CD4-positive, alpha-beta T cell (primary cell): ENCODE measurements at regions of chr6 and their contacts with region 1.

Region 1: GRCh38 chr6:135128268-135128914 is 52.7 kb upstream of the MYB start:
- DNase-seq: peak in 11 of 14 experiments; percentile 14 to 88 (median 40)
- ATAC-seq: peak; percentile 96
- H3K4me3 ChIP-seq: no peak overlapping the region
- H3K4me3 Mint-ChIP-seq: peak overlapping the region; percentile 75
- H3K27ac ChIP-seq: peak overlapping the region; percentile 55 to 73
- H3K27ac Mint-ChIP-seq: peak overlapping the region; percentile 91
- H3K4me1 ChIP-seq: peaks cover 21% of the 10 kb centered on the region
- H3K4me1 Mint-ChIP-seq: peaks cover 39% of the 10 kb centered on the region
- H3K27me3 ChIP-seq: no peaks in the 10 kb centered on the region
- H3K27me3 Mint-ChIP-seq: no peaks in the 10 kb centered on the region
- CTCF ChIP-seq: no peak

Region 2: DNA sequence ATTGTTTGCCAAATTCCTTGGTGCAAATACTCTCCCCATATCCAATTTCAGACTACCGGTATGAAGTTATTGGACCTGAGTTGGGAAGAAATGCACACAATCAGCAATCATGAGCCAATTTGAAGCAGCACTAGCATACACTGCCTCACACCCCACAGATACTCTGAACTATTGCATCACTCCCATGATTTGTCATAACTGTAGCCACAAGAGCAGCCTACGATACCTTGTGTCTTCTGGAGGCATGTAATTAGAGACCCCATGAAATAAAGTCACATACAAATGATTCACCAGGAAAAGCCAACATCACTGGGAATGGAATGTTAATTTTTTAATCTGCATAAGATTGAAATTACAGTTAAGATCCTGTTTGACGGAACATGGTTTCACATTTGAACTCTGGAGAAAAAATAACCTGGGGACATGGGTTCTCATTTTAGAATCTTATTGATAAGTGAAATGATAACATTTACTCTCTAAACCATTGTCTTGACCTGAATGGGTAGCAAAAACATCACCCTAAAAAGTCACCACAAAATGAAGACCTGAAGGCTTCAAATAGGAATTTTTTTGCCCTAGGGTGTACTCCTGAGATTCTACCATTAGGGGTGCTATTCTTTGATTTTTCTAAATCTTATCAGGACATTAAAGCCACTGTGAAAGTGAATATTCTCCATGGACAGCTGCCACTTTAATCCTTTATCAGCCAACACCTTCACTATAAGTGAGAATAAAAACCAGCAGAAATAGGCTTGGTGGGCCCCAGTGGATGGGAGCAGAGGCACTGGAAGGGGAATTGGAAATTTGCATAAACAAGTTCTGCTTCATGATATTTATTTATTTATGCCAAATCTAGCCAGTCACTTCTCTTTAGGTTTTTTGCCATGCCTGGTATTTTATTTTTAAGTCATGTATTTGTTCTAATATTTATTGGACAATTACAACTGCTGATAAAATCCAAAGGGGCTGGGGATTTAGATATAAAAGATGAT is 39.3 kb before region 1 on chr6:
- CTCF ChIA-PET with region 1: interaction called, 3 read pairs
- POLR2A ChIA-PET with region 1: interaction called, 14 read pairs
- intact Hi-C with region 1: loop called in 1 of 2 experiments (anchors 2 kb)
- DNase-seq: peak in 4 of 14 experiments; percentile 50 to 72 (median 64)
- ATAC-seq: peak; percentile 60
- H3K4me3 ChIP-seq: peak overlapping the region; percentile 38
- H3K4me3 Mint-ChIP-seq: peak overlapping the region; percentile 78
- H3K27ac ChIP-seq: peak overlapping the region in 1 of 2 donors; percentile 14
- H3K27ac Mint-ChIP-seq: peak overlapping the region; percentile 94
- H3K4me1 ChIP-seq: peaks cover 44% of the 10 kb centered on the region
- H3K4me1 Mint-ChIP-seq: peaks cover 86% of the 10 kb centered on the region
- H3K27me3 ChIP-seq: no peaks in the 10 kb centered on the region
- H3K27me3 Mint-ChIP-seq: no peaks in the 10 kb centered on the region
- CTCF ChIP-seq: peak; percentile 62

Region 3: GRCh38 chr6:135105710-135106109 is 22.7 kb before region 1 on chr6:
- CTCF ChIA-PET with region 1: no interaction called
- POLR2A ChIA-PET with region 1: interaction called, 19 read pairs
- intact Hi-C with region 1: no loop called
- DNase-seq: no peak
- ATAC-seq: no peak
- H3K4me3 ChIP-seq: no peak overlapping the region
- H3K4me3 Mint-ChIP-seq: no peak overlapping the region
- H3K27ac ChIP-seq: no peak overlapping the region
- H3K27ac Mint-ChIP-seq: peak overlapping the region; percentile 89
- H3K4me1 ChIP-seq: peaks cover 24% of the 10 kb centered on the region
- H3K4me1 Mint-ChIP-seq: peaks cover 66% of the 10 kb centered on the region
- H3K27me3 ChIP-seq: no peaks in the 10 kb centered on the region
- H3K27me3 Mint-ChIP-seq: no peaks in the 10 kb centered on the region
- CTCF ChIP-seq: no peak

Region 4: DNA sequence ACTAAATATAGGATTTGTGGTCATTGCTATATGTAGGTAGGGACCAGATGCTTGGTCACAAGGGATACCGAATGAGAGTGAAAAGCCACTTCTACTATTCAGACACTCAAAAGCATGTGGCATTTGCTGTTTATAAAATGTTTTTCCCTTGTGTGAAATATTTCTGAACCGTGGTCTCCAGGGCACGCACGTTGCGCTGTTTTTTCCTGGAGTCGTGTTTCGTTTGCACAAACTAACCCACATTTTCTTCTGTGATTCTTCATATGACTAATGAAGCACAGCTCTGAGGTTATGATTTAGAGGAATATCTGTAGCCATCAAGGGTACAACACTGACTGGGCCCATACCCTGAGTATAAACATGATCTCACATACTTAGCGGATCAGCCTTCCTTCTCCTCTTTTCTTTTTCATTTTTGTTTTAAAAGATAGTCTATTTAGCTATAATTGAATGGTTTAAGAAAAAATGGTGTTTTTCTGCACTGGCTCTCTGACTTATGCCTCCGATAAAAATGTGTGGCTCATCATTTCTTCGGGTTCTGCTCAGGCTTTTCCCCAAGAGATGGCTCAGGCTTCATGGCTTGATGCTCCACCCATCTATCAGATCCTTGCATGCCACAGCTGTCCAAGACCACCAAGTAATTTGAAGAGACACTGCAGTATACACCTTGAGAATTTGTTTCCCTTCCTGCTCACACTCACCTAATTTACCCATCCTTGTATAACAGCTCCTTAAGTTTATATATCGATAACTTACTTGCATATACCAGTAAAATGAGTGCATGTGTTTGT is 13.8 kb before region 1 on chr6:
- CTCF ChIA-PET with region 1: interaction called, 4 read pairs
- POLR2A ChIA-PET with region 1: interaction called, 16 read pairs
- intact Hi-C with region 1: no loop called
- DNase-seq: peak in 2 of 14 experiments; percentile 16 to 63
- ATAC-seq: no peak
- H3K4me3 ChIP-seq: no peak overlapping the region
- H3K4me3 Mint-ChIP-seq: no peak overlapping the region
- H3K27ac ChIP-seq: no peak overlapping the region
- H3K27ac Mint-ChIP-seq: no peak overlapping the region
- H3K4me1 ChIP-seq: peaks cover 18% of the 10 kb centered on the region
- H3K4me1 Mint-ChIP-seq: peaks cover 71% of the 10 kb centered on the region
- H3K27me3 ChIP-seq: no peaks in the 10 kb centered on the region
- H3K27me3 Mint-ChIP-seq: no peaks in the 10 kb centered on the region
- CTCF ChIP-seq: no peak

Region 5: GRCh38 chr6:135145063-135145800 is 16.8 kb after region 1 on chr6:
- CTCF ChIA-PET with region 1: interaction called, 3 read pairs
- POLR2A ChIA-PET with region 1: interaction called, 12 read pairs
- intact Hi-C with region 1: no loop called
- DNase-seq: peak in 4 of 14 experiments; percentile 39 to 65 (median 61)
- ATAC-seq: peak; percentile 74
- H3K4me3 ChIP-seq: peak overlapping the region; percentile 15
- H3K4me3 Mint-ChIP-seq: peak overlapping the region; percentile 3
- H3K27ac ChIP-seq: no peak overlapping the region
- H3K27ac Mint-ChIP-seq: peak overlapping the region; percentile 6
- H3K4me1 ChIP-seq: no peaks in the 10 kb centered on the region
- H3K4me1 Mint-ChIP-seq: peaks cover 51% of the 10 kb centered on the region
- H3K27me3 ChIP-seq: no peaks in the 10 kb centered on the region
- H3K27me3 Mint-ChIP-seq: no peaks in the 10 kb centered on the region
- CTCF ChIP-seq: peak; percentile 83